Naive thymus-derived CD8-positive, alpha-beta T cell (primary cell): ENCODE measurements at regions of chr11 and their contacts with region 1.

Region 1: DNA sequence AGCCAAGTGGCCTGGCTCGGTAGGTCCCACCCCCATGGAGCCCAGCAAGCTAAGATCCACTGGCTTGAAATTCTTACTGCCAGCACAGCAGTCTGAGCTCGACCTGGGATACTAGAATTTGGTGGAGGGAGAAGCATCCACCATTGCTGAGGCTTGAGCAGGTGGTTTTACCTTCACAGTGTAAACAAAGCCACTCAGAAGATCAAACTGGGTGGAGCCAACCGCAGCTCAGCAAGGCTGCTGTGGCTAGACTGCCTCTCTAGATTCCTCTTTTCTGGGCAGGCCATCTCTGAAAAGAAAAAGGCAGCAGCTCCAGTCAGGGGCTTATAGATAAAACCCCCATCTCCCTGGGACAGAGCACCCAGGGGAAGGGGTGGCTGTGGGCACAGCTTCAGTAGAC is 22.3 kb upstream of the OR5B21 start:
- DNase-seq: peak in 9 of 10 donors; percentile 32 to 83 (median 56)
- ATAC-seq: peak; percentile 86 to 90
- H3K4me3 Mint-ChIP-seq: peak overlapping the region; percentile 24 to 74 (median 56)
- H3K27ac Mint-ChIP-seq: peak overlapping the region; percentile 86 to 97 (median 94)
- H3K4me1 Mint-ChIP-seq: peaks cover 26 to 75% (median 59%) of the 10 kb centered on the region in 4 donors
- H3K27me3 Mint-ChIP-seq: no peaks in the 10 kb centered on the region

Region 2: GRCh38 chr11:58573451-58574104 is 43.3 kb after region 1 on chr11:
- POLR2A ChIA-PET with region 1: interaction called, 36 read pairs
- DNase-seq: peak in 8 of 10 donors; percentile 20 to 73 (median 44)
- ATAC-seq: peak; percentile 31 to 40
- H3K4me3 Mint-ChIP-seq: peak overlapping the region; percentile 92 to 99 (median 96)
- H3K27ac Mint-ChIP-seq: peak overlapping the region; percentile 97 to 100 (median 100)
- H3K4me1 Mint-ChIP-seq: peaks cover 24 to 76% (median 69%) of the 10 kb centered on the region in 4 donors
- H3K27me3 Mint-ChIP-seq: no peaks in the 10 kb centered on the region

Region 3: GRCh38 chr11:58597486-58598144 is 67.4 kb after region 1 on chr11:
- POLR2A ChIA-PET with region 1: no interaction called
- DNase-seq: no peak
- ATAC-seq: peak; percentile 33 to 49
- H3K4me3 Mint-ChIP-seq: peak overlapping the region; percentile 15 to 71 (median 46)
- H3K27ac Mint-ChIP-seq: peak overlapping the region; percentile 15 to 86 (median 66)
- H3K4me1 Mint-ChIP-seq: peaks cover 45 to 91% (median 88%) of the 10 kb centered on the region in 4 donors
- H3K27me3 Mint-ChIP-seq: no peaks in the 10 kb centered on the region